SK-N-SH (cell line): ENCODE measurements at regions of chr17 and their contacts with region 1.

Region 1: DNA sequence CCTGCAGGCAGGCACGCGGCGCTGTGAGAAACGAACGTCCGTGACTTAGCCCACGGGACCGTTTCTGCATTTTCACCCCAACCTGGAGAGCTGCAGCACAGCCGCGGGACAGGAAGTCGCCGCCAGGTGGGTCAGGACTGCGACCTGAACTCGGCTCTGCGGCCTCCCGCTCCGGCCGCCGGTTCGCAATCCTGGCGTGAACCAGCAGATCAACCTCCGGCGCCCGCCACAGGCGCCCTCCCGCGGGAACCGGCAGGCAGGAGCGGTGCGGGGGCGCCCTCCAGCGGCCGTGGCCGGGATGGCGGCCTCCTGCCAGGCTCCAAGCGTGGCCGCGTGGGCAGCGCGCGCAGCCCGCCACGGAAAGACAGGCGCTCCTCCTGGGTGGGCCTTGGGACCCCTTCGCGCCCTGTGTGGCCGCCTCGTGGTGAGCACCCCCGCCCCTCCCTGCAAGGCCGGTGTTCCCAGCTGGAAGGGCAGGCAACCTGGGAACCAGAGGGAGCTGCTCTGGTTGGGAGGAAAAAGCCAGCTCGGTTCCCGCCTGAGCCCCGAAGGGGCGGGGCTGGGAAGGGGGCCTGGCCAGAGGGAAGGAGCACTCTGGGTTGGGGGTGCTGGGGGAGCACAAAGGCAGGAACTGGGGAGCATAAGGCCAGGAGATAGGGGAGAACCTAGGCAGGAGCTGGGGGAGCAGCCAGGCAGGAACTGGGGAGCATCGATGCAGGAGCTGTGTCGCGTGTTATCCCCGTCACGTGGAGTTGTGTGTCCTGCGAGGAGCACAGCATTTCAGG is 28.2 kb downstream of the ACTG1 start:
- DNase-seq: peak; percentile 97
- H3K4me3 ChIP-seq: peak overlapping the region; percentile 36 to 61
- H3K27ac ChIP-seq: no peak overlapping the region
- H3K4me1 ChIP-seq: peaks cover 6 to 51% of the 10 kb centered on the region in 2 experiments; a peak in 2 of 4 replicates
- H3K27me3 ChIP-seq: no peaks in the 10 kb centered on the region
- CTCF ChIP-seq: peak; percentile 95
- EP300 ChIP-seq: no peak
- RAD21 ChIP-seq: peak; percentile 98

Region 2: DNA sequence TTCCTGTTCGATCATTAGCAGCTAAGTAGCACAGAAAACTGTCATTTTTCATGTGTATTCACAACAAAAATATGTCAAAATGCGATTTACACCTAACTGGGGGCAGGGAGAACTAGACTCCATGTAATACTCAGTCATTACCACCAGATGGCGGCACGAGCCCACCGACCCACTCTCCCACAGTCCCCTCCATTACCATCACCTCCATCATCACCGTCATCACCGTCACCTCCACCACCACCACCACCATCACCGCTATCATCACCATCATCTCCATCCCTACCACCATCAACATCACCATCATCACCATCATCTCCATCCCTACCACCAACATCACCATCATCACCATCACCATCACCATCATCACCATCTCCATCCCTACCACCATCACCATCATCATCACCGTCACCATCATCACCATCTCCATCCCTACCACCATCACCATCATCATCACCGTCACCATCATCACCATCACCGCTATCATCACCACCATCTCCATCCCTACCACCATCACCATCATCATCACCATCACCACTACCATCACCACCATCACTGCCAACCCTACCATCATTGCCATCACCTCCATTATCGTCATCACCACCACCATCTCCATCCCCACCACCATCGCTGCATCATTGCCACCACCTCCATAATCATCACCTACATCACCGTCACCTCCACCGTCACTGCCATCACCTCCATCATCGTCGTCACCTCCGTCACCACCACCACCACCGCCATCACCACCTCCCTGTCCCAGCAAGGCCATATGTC is 230.8 kb before region 1 on chr17:
- CTCF ChIA-PET with region 1: interaction called, 140 read pairs
- POLR2A ChIA-PET with region 1: interaction called, 5 read pairs
- DNase-seq: peak; percentile 92
- H3K4me3 ChIP-seq: peak overlapping the region in 1 of 2 experiments; percentile 21; a peak in 1 of 4 replicates
- H3K27ac ChIP-seq: no peak overlapping the region; a peak in 1 of 4 replicates
- H3K4me1 ChIP-seq: peaks cover 0 to 38% of the 10 kb centered on the region in 2 experiments; a peak in 1 of 4 replicates
- H3K27me3 ChIP-seq: no peaks in the 10 kb centered on the region
- CTCF ChIP-seq: peak; percentile 92
- EP300 ChIP-seq: no peak
- RAD21 ChIP-seq: peak; percentile 99

Region 3: GRCh38 chr17:81335388-81336148 is 148.8 kb before region 1 on chr17:
- CTCF ChIA-PET with region 1: interaction called, 10 read pairs
- POLR2A ChIA-PET with region 1: interaction called, 3 read pairs
- DNase-seq: no peak
- H3K4me3 ChIP-seq: no peak overlapping the region
- H3K27ac ChIP-seq: no peak overlapping the region; a peak in 1 of 4 replicates
- H3K4me1 ChIP-seq: peaks cover 0 to 91% of the 10 kb centered on the region in 2 experiments; a peak in 2 of 4 replicates
- H3K27me3 ChIP-seq: no peaks in the 10 kb centered on the region
- CTCF ChIP-seq: no peak
- EP300 ChIP-seq: no peak
- RAD21 ChIP-seq: no peak

Region 4: DNA sequence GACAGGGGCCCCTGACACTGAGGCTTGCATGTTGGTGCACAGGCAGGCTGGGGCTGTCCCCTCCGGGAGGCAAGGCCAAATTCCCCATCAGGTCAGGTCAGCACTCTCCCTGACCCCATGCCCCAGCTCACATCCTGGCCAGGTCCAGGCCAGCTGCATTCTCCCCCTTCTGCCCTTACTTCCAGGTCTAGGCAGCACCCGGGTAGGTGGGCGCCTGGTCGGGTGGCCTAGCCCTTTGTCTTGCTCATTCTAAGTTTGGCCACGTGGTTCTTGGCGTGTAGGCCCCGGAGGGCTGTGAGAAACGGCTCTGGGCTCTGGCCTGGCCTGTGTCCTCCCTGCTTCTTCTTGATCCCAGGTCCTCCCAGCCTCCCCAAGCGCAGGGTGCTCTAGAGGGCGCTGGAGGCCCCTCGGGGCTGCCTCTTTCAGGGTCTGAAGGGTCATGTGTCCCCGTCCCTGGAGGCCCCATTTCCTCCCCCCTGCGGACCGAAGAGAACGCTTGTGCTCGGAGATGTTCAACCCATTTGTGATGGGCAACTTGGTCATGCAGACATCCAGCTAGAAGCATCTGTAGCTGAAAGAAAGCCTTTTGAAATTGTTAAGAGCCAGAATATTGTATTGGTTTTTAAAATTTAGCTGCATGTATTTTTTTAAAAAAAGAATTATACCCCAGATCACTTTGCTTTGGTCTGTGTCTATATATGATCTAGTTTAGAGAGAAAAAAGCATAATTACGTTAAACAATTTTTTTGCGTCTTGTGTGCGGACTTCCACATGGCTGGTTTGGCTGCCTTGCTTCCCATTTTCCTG is 82.5 kb before region 1 on chr17:
- CTCF ChIA-PET with region 1: interaction called, 60 read pairs
- POLR2A ChIA-PET with region 1: interaction called, 4 read pairs
- DNase-seq: peak; percentile 81
- H3K4me3 ChIP-seq: no peak overlapping the region
- H3K27ac ChIP-seq: no peak overlapping the region; a peak in 1 of 4 replicates
- H3K4me1 ChIP-seq: peaks cover 56 to 73% of the 10 kb centered on the region in 2 experiments
- H3K27me3 ChIP-seq: no peaks in the 10 kb centered on the region
- CTCF ChIP-seq: peak; percentile 63
- EP300 ChIP-seq: no peak
- RAD21 ChIP-seq: peak; percentile 47

Region 5: DNA sequence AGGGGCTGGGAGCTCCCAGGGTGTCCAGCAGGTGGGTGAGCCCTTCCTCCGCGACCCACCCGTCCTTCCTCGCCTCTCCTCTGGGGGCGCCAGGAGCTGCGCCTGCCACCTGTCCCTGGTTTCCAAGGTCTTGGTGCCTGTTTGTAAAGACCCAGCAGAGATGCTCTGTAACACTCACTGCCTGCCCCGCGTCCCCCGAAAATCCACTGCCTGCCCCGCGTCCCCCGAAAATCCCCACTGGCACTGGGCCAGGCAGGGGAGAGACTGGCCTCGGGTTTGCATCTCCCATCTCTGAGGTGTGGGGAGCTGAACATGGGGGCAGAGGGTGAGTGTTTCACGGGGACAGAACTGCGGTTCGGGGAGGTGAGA is 43.5 kb before region 1 on chr17:
- CTCF ChIA-PET with region 1: interaction called, 68 read pairs
- POLR2A ChIA-PET with region 1: no interaction called
- DNase-seq: peak; percentile 98
- H3K4me3 ChIP-seq: no peak overlapping the region; a peak in 1 of 4 replicates
- H3K27ac ChIP-seq: no peak overlapping the region
- H3K4me1 ChIP-seq: peaks cover 0 to 29% of the 10 kb centered on the region in 2 experiments; a peak in 1 of 4 replicates
- H3K27me3 ChIP-seq: no peaks in the 10 kb centered on the region
- CTCF ChIP-seq: peak; percentile 81
- EP300 ChIP-seq: no peak
- RAD21 ChIP-seq: peak; percentile 77

Region 6: DNA sequence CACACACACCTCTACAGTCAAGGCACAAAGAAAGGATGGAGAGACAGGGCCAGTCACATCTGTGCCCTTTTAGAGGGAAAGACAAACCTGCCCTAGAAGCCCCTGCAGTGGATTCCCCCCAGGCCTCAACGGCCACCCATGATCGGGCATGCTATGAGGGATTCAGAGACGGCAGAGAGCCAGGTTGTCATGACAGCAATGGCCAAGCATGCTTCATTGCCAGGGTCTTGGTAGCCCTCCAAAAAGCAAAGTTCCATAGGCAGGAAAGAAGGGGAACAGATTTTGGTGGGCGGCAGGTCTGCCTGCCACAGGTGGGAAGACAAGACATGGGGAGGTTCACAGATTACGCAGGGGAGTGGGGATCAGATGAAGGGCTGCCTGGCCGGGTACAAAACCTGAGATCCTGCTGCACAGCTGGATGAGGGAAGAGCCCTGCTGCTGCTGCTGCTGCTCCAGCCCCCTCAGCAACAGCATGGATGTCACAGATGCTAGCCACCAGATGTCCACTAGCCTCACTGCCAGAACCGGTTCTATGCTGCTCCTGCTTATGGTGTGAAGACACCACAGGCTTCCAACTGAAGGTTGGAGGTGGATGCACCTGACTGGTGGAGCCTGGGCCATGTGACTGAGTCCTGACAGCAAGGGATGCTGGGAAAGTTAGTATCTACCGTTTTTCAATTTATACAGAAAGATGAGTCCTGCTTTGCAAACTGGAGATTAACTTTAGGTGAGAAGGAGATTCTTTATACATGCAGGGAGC is 10.4 kb after region 1 on chr17:
- CTCF ChIA-PET with region 1: interaction called, 22 read pairs
- POLR2A ChIA-PET with region 1: no interaction called
- DNase-seq: peak; percentile 86
- H3K4me3 ChIP-seq: no peak overlapping the region
- H3K27ac ChIP-seq: peak overlapping the region in 1 of 2 experiments; percentile 29; a peak in 1 of 4 replicates
- H3K4me1 ChIP-seq: peaks cover 0 to 10% of the 10 kb centered on the region in 2 experiments; a peak in 1 of 4 replicates
- H3K27me3 ChIP-seq: no peaks in the 10 kb centered on the region
- CTCF ChIP-seq: no peak
- EP300 ChIP-seq: no peak
- RAD21 ChIP-seq: no peak; the same call in 1 of the 2 replicates

Region 7: DNA sequence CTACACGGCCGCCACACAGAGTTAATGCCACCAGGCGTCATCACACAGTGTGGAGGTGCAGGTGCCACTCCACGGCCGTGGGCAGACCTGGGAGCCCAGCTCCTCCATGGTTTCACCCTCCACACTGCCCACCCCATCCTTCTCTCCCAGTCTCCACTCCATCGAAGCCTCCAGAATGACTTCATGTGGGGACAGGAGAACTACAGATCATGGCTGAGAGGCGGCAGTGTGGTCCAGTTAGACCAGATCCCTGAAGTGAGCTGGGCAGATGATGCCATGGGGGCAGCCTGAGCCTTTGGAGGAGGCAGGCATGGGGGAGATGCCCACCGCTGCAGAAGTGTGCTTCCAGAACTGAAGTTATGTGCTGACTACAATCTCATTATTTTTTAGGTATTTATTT is 105.7 kb after region 1 on chr17:
- CTCF ChIA-PET with region 1: no interaction called
- POLR2A ChIA-PET with region 1: no interaction called
- DNase-seq: no peak
- H3K4me3 ChIP-seq: no peak overlapping the region
- H3K27ac ChIP-seq: no peak overlapping the region
- H3K4me1 ChIP-seq: no peaks in the 10 kb centered on the region
- H3K27me3 ChIP-seq: no peaks in the 10 kb centered on the region
- CTCF ChIP-seq: no peak
- EP300 ChIP-seq: no peak
- RAD21 ChIP-seq: no peak

Region 8: DNA sequence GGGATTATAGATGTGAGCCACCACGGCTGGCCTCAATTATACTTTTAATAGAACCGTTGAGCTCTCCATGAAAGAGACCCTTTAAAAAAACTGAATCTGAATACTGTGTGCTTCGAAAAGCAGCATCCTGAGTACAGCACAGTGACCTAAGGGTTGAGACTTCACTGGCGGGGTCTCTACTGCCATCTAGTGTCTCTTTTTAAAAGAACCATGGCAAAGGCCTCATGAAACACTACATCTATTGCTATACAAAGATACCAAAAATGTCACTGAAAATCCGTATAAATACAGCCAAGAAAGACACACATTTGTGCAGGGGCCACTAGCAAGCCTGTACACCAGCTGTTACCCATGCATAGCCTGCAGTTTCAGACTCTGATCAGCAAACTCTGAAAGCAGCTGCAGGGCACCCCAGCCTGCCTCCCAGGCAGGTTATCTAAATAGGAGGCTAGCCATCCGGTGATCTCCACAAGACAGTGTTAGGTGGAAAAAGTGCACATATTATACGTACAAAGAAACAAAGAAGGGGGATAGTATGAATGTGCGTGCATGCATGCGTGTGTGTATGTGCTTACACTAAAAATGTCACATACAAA is 117.2 kb after region 1 on chr17:
- CTCF ChIA-PET with region 1: interaction called, 16 read pairs
- POLR2A ChIA-PET with region 1: no interaction called
- DNase-seq: peak; percentile 87
- H3K4me3 ChIP-seq: no peak overlapping the region
- H3K27ac ChIP-seq: peak overlapping the region in 1 of 2 experiments; percentile 31; a peak in 1 of 4 replicates
- H3K4me1 ChIP-seq: peaks cover 2 to 20% of the 10 kb centered on the region in 2 experiments
- H3K27me3 ChIP-seq: no peaks in the 10 kb centered on the region
- CTCF ChIP-seq: peak; percentile 98
- EP300 ChIP-seq: no peak
- RAD21 ChIP-seq: peak; percentile 92